MCF 10A (cell line): ENCODE measurements at regions of chr10 and their contacts with region 1.

Region 1: DNA sequence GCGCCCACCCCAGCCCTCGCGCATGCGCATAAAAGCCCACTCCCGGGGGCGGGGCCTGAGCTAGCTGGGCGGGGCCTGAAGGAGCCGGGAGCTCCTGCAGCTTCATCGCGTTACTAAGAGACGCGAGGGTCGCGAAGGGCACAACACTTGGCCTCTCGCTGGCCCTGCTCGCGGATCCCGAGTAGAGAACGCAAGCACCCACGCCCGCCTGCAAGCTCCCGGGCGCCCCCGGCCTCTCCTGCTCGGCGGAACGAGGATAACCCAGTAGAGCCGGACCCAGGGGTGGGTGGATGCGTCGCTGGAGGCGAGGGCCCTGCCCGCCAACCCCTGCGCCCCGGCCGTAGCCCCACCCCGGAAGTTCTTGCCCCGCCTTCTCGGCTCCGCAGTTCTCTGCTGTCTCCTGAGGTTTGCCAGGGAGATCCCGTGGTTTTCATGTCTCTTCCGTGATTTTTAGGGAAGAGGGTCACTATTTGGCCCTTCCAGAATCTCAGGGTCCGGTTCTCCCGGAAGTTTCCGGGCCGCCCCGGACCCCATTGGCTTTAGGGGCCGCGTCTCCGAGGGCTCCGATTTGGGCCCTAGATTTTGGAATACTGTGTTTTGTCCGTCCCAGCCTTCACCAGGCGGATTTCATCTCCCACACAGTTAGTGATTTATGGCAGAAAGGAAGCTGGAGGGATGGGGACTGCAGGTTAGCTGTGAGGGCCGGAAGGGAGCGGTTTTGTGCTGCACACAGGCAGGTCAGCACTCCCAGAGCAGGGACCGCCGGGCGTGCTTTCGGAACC is at the start of gene MEIG1:
- DNase-seq: peak; percentile 93
- H3K4me3 Mint-ChIP-seq: peak within 1 kb of the TSS; percentile 98
- H3K27ac Mint-ChIP-seq: peak within 1 kb of the TSS; percentile 99
- H3K4me1 Mint-ChIP-seq: no peaks in the 10 kb centered on the region
- H3K27me3 Mint-ChIP-seq: no peaks in the 10 kb centered on the region
- CTCF ChIP-seq: no peak
- total RNA-seq, gene MEIG1: 1.7 TPM in 1 of 2 replicates, not detected in the other

Region 2: DNA sequence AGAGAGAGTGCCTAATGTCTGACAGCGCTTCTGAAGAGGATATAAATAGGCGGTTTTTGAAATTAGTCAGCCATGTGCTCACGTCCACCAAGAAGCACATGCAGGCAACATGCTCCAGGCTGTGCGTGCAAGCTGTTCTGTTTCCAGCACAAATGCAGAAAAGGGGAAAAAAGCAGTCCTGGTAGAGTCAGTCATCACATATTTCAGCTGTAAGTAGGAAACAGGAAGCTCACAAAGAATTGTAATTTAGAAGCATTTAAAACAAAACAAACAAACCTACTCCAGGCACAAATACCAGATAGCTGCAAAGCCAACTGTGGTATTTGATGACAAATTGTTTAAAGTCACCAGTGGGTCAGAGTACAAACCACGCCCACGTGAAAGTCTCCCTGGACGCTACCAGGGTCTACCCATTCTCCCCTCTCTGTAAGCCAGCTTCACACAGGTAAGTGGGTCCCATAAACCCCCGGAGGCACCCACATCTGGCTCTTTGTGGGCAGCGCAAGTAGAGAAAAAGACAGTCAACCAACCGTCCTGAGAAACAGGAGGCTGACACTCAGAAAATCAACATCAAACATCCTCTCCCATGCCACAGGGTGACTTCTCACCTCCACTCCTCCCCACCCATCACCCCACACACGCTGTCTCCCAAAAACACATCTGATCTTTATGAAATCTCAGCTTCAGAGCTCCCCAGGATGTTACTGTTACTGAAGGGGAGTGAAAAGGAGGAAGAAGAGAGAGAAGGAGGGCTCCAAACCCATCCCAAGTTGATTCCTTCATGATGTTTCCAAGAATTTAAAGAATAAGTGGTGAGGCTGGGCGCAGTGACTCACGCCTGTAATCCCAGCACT is 371.2 kb before region 1 on chr10:
- CTCF ChIA-PET with region 1: no interaction called
- POLR2A ChIA-PET with region 1: no interaction called
- intact Hi-C with region 1: no loop called
- DNase-seq: peak; percentile 52
- H3K4me3 Mint-ChIP-seq: no peak overlapping the region
- H3K27ac Mint-ChIP-seq: peak overlapping the region; percentile 59
- H3K4me1 Mint-ChIP-seq: peaks cover 23% of the 10 kb centered on the region
- H3K27me3 Mint-ChIP-seq: no peaks in the 10 kb centered on the region
- CTCF ChIP-seq: no peak

Region 3: DNA sequence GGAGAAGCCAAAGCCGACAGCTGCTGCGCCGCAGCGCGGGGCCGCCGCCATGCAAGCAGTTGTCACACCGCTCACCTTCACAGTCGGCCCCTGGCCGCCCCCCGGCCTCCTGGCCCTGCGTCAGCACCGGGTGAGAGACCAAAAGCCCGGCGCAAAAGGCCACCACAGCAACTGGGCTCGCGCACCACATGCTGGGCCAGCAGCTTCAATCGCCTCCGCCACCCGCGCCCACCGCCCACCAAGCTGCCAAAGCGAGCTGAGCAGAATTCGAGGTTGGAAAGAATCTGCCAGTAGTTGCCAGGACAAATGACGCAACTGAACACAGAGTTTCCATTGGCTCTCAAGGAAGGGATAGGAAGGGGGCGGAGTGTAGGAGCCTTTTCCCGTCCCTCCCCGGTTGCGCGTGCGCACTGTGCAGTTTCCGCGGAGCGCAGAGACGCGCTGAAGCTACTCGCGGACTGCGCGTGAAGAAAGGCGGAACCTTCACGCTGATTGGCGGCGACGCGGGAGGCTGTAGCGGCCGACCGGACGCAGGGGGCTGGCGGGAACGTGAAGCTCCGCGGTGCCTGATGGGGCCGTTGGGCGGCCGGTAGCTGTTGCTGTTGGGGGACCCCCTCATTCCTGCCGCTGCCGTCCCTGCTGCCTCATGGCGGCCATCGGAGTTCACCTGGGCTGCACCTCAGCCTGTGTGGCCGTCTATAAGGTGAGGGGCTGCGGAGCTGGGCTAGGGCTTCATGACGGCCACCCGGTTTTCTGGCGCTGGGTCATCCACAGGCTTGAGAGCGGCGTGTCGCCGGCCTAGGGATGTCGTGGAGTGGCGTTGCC is 121.5 kb before region 1 on chr10 and contains the starts of genes CDNF, HSPA14 and MSANTD7:
- CTCF ChIA-PET with region 1: no interaction called
- POLR2A ChIA-PET with region 1: interaction called, 25 read pairs
- intact Hi-C with region 1: loop called (anchors 5 kb)
- DNase-seq: peak; percentile 99
- H3K4me3 Mint-ChIP-seq: peak within 1 kb of the TSS; percentile 76
- H3K27ac Mint-ChIP-seq: peak within 1 kb of the TSS; percentile 91
- H3K4me1 Mint-ChIP-seq: no peaks in the 10 kb centered on the region
- H3K27me3 Mint-ChIP-seq: no peaks in the 10 kb centered on the region
- CTCF ChIP-seq: no peak
- total RNA-seq, gene CDNF: 1.9 and 2.9 TPM in 2 replicates
- total RNA-seq, gene HSPA14: 12.1 and 14.0 TPM in 2 replicates
- total RNA-seq, gene MSANTD7: 17.2 and 18.1 TPM in 2 replicates

Region 4: DNA sequence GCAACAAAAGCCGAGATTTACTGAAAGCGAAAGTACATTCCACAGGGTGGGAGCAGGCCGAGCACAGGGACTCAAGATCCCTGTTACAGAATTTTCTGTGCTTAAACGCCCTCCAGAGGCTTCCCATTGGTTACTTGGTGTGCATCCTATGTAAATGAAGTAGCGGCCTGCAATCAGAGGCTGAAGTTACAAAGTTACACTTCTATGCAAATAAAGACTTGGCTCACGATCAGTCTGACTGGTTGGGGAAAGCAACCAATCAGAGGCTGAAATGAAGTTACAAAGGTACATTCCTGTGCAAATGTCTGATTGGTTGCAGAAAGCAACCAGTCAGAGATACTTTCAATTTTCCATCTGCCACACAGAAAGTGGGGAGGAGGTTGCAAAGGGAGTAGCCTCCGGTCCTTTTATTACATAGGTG is 125.0 kb after region 1 on chr10:
- CTCF ChIA-PET with region 1: interaction called, 3 read pairs
- POLR2A ChIA-PET with region 1: interaction called, 43 read pairs
- intact Hi-C with region 1: no loop called
- DNase-seq: peak; percentile 97
- H3K4me3 Mint-ChIP-seq: peak overlapping the region; percentile 92
- H3K27ac Mint-ChIP-seq: no peak overlapping the region
- H3K4me1 Mint-ChIP-seq: peaks cover 7% of the 10 kb centered on the region
- H3K27me3 Mint-ChIP-seq: no peaks in the 10 kb centered on the region
- CTCF ChIP-seq: no peak

Region 5: GRCh38 chr10:15097011-15097812 is 137.7 kb after region 1 on chr10 and contains the start of gene RPP38:
- CTCF ChIA-PET with region 1: interaction called, 9 read pairs
- POLR2A ChIA-PET with region 1: interaction called, 27 read pairs
- intact Hi-C with region 1: no loop called
- DNase-seq: peak; percentile 96
- H3K4me3 Mint-ChIP-seq: peak within 1 kb of the TSS; percentile 94
- H3K27ac Mint-ChIP-seq: peak within 1 kb of the TSS; percentile 92
- H3K4me1 Mint-ChIP-seq: peaks cover 16% of the 10 kb centered on the region
- H3K27me3 Mint-ChIP-seq: no peaks in the 10 kb centered on the region
- CTCF ChIP-seq: no peak
- total RNA-seq, gene RPP38: 26.4 and 30.8 TPM in 2 replicates

Region 6: GRCh38 chr10:16902606-16903005 is 1943.1 kb after region 1 on chr10:
- CTCF ChIA-PET with region 1: no interaction called
- POLR2A ChIA-PET with region 1: no interaction called
- intact Hi-C with region 1: no loop called
- DNase-seq: no peak
- H3K4me3 Mint-ChIP-seq: no peak overlapping the region
- H3K27ac Mint-ChIP-seq: no peak overlapping the region
- H3K4me1 Mint-ChIP-seq: no peaks in the 10 kb centered on the region
- H3K27me3 Mint-ChIP-seq: no peaks in the 10 kb centered on the region
- CTCF ChIP-seq: no peak